A549 (cell line): ENCODE measurements at regions of chr17 and their contacts with region 1.

Region 1: GRCh38 chr17:82037113-82037888 is at the start of gene DCXR:
- DNase-seq: peak; percentile 99
- ATAC-seq: peak; percentile 89 to 96
- H3K4me3 ChIP-seq: peak within 1 kb of the TSS; percentile 52
- H3K27ac ChIP-seq: peak within 1 kb of the TSS; percentile 72 to 89
- H3K4me1 ChIP-seq: peaks cover 9% of the 10 kb centered on the region; the same call in 2 of the 3 replicates
- CTCF ChIP-seq: peak; percentile 89
- EP300 ChIP-seq: peak in 1 of 2 experiments; percentile 18; a peak in 1 of 5 replicates
- POLR2A ChIP-seq: peak; percentile 84
- RAD21 ChIP-seq: peak in 1 of 2 experiments; percentile 47; a peak in 2 of 5 replicates
- polyA plus RNA-seq, gene DCXR: 39.3 and 48.3 TPM in 2 replicates

Region 2: GRCh38 chr17:81980707-81981343 is 56.5 kb before region 1 on chr17:
- CTCF ChIA-PET with region 1: no interaction called
- POLR2A ChIA-PET with region 1: no interaction called
- DNase-seq: no peak
- ATAC-seq: no peak
- H3K4me3 ChIP-seq: no peak overlapping the region
- H3K27ac ChIP-seq: no peak overlapping the region
- H3K4me1 ChIP-seq: peaks cover 12% of the 10 kb centered on the region
- CTCF ChIP-seq: no peak
- EP300 ChIP-seq: no peak
- POLR2A ChIP-seq: no peak
- RAD21 ChIP-seq: no peak

Region 3: DNA sequence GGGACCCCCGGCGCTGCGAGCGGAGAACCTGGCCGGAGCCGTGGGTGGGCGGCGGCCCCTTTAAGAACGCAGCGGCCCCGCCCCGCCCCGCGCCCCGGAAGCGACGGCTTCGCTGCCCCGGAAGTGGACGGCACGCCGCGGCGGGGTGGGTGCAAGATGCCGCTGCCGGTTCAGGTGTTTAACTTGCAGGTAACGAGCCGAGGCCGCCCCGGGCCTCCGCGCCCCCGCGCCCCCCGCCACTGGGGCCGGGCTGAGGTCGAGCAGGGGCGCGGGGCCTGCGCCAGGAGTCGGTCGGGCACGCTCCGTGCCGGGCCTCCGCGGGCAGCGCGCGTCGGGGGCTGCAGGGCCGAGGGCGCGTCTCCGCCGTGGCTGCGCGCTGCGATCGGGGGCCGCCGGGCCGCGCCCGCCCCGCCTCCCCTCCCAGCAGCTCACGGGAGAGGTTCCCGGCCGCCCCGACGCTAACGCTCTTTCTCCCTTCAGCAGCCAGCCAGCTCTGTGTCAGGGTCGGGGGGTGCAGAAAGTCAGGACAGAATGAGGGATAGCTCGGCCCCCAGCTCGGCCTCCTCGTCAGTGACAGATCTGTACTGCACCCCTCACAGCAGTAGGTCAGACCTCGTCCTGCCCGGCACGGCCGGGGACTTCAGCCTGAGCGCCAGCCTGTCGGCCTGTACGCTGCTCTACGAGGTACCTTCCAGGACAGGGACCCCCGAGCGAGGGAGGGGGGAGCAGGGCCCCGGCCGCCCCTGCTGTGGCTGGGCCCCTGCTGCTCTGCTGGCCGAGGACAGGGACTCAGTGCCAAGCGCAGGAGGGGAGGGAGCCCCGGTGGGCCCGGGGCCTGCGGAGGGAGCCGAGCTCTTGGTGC is 14.7 kb after region 1 on chr17 and contains the starts of genes GPS1 and RFNG:
- CTCF ChIA-PET with region 1: interaction called, 191 read pairs
- POLR2A ChIA-PET with region 1: interaction called, 8 read pairs
- DNase-seq: peak; percentile 69 to 85
- ATAC-seq: peak; percentile 63
- H3K4me3 ChIP-seq: peak within 1 kb of the TSS; percentile 97
- H3K27ac ChIP-seq: peak within 1 kb of the TSS; percentile 91 to 95
- H3K4me1 ChIP-seq: peaks cover 16% of the 10 kb centered on the region; the same call in 2 of the 3 replicates
- CTCF ChIP-seq: no peak
- EP300 ChIP-seq: no peak
- POLR2A ChIP-seq: peak; percentile 44
- RAD21 ChIP-seq: no peak
- polyA plus RNA-seq, gene GPS1: 89.4 and 93.8 TPM in 2 replicates
- polyA plus RNA-seq, gene RFNG: 8.4 and 8.9 TPM in 2 replicates

Region 4: DNA sequence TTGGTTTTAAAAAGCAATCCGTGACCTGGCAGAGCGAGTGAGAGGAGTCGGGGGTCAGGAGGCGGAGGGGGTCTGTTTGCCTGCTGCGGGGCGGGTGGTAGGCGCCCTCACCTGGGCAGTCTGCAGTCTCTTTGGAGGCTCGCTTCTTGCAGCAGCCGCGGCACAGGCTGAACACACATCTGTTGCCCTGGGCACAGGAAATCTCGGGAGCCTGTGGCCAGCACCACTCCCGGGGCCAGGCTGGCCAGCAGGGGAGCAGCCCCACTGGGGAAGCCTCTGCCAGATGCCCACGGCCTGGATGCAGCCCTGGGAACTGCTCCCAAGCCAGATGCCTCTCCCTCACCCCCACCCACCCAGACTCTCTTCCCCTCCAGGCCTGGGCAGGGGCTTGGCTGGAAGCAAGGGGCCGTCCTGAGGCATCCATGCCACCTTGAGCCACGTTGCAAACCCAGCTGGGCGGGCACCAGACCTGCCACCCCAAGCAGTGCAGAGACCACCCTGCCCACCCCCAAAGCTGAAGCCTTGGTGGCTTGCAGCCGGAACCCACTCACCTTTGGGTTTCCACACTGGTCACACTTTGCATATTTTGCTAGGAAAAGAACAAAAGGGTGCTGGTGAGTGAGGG is 21.0 kb after region 1 on chr17:
- CTCF ChIA-PET with region 1: interaction called, 191 read pairs
- POLR2A ChIA-PET with region 1: interaction called, 10 read pairs
- DNase-seq: no peak
- ATAC-seq: peak; percentile 4 to 8; a peak in 2 of 6 replicates
- H3K4me3 ChIP-seq: no peak overlapping the region
- H3K27ac ChIP-seq: no peak overlapping the region
- H3K4me1 ChIP-seq: peaks cover 2% of the 10 kb centered on the region; the same call in 2 of the 3 replicates
- CTCF ChIP-seq: no peak
- EP300 ChIP-seq: no peak
- POLR2A ChIP-seq: no peak
- RAD21 ChIP-seq: no peak

Region 5: GRCh38 chr17:82065638-82066303 is 28.5 kb after region 1 on chr17 and contains the start of gene DUS1L:
- CTCF ChIA-PET with region 1: interaction called, 191 read pairs
- POLR2A ChIA-PET with region 1: interaction called, 10 read pairs
- DNase-seq: peak; percentile 68 to 72
- ATAC-seq: peak; percentile 52 to 65; a peak in 5 of 6 replicates
- H3K4me3 ChIP-seq: peak within 1 kb of the TSS; percentile 94
- H3K27ac ChIP-seq: peak within 1 kb of the TSS; percentile 94 to 96
- H3K4me1 ChIP-seq: peaks cover 19% of the 10 kb centered on the region
- CTCF ChIP-seq: no peak
- EP300 ChIP-seq: no peak
- POLR2A ChIP-seq: peak; percentile 59
- RAD21 ChIP-seq: no peak
- polyA plus RNA-seq, gene DUS1L: 48.1 and 59.5 TPM in 2 replicates

Region 6: DNA sequence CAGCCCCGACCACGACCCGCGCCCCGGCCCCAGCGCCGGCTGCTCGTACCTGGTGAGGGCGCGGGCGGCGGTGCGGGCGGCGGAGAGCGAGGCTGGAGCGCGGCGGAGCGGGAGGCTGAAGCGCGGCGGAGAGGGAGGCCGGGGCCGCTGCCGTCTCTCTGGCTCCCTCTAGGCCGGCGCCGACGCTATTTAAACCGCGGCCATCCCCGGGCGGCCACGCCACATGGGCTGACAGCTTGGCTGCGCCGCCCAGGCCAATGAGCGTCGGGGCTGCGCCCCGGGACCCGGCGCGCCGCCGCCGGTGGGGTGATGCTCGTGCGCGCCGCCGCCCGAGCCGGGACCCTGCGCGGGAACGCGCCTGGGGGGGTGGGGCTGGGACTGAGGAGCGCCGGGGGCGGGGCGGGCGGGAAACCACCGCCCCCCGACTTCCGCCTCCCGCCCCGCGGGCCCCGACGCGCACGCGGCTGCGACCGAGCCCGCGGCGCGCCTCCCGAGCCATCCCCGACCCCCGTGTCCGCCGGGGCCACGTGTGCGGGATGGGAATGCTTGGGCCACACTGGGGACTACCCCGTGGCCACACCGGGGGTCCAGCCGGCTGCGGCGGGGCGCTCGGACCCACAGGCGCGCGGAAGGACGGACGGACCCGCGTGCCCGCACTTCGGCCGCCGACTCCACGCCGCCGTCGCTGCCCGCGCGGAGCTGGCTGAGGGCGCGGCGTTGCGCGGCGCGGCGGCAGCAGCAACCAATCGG is 60.9 kb after region 1 on chr17 and contains the start of gene FASN:
- CTCF ChIA-PET with region 1: interaction called, 11 read pairs
- POLR2A ChIA-PET with region 1: interaction called, 33 read pairs
- DNase-seq: peak; percentile 97 to 100
- ATAC-seq: peak; percentile 70 to 72
- H3K4me3 ChIP-seq: peak within 1 kb of the TSS; percentile 91
- H3K27ac ChIP-seq: peak within 1 kb of the TSS; percentile 95 to 96
- H3K4me1 ChIP-seq: peaks cover 52% of the 10 kb centered on the region
- CTCF ChIP-seq: peak; percentile 64
- EP300 ChIP-seq: no peak
- POLR2A ChIP-seq: peak; percentile 99
- RAD21 ChIP-seq: no peak; a peak in 3 of 5 replicates
- polyA plus RNA-seq, gene FASN: 12.9 and 16.3 TPM in 2 replicates

Region 7: GRCh38 chr17:82134101-82134500 is 96.8 kb after region 1 on chr17:
- CTCF ChIA-PET with region 1: no interaction called
- POLR2A ChIA-PET with region 1: no interaction called
- DNase-seq: no peak
- ATAC-seq: no peak
- H3K4me3 ChIP-seq: no peak overlapping the region
- H3K27ac ChIP-seq: peak overlapping the region; percentile 43 to 65; a peak in 2 of 6 replicates
- H3K4me1 ChIP-seq: peaks cover 8% of the 10 kb centered on the region; the same call in 2 of the 3 replicates
- CTCF ChIP-seq: no peak
- EP300 ChIP-seq: no peak
- POLR2A ChIP-seq: no peak
- RAD21 ChIP-seq: no peak

Region 8: DNA sequence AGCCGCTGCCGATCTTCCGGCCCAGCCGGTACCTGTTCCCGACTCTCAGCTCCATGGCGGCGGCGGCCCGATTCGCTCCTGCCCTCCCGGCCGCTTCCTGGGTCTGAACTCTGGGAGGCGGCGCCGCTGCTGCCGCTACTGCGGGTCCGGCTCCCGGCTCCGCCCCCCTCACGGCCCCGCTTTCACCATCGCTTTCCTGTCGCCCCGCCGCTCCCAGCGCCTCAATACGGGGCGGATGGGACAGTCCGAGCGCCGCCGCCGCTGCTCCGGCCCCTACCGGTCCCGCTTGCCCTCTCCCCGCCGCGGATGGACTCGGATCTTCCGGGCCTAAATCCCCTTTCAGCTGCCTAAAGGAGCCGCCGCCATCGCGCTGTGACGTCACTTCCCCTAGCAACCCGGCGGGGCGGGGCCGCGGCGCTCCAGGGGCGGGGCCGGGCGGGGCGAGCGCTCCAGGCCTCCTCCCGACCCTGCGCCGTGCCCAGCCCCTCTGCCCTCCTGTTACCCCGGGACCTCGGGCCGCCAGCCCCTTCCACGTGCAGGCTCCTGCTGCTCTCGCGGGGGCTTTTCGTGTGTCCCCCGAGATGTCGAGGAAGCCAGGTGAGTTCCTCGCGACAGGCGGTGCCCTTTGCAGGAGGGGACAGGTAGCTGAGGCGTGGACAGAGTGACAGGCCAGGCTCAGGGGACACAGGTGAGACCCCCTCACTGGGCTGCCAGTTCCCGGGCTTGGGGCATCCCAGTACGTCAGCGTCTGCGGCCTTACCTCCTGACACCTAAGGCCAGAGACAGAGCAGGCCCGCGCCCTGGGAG is 236.2 kb after region 1 on chr17 and contains the start of gene CSNK1D:
- CTCF ChIA-PET with region 1: no interaction called
- POLR2A ChIA-PET with region 1: no interaction called
- DNase-seq: peak; percentile 90 to 94
- ATAC-seq: peak; percentile 82 to 87
- H3K4me3 ChIP-seq: peak within 1 kb of the TSS; percentile 97
- H3K27ac ChIP-seq: peak within 1 kb of the TSS; percentile 99 to 100
- H3K4me1 ChIP-seq: peaks cover 47% of the 10 kb centered on the region
- CTCF ChIP-seq: no peak
- EP300 ChIP-seq: no peak
- POLR2A ChIP-seq: peak; percentile 63
- RAD21 ChIP-seq: no peak
- polyA plus RNA-seq, gene CSNK1D: 130 and 139 TPM in 2 replicates